ENCODE measurements at regions of chr21 and their contacts with region 1.

Region 1: DNA sequence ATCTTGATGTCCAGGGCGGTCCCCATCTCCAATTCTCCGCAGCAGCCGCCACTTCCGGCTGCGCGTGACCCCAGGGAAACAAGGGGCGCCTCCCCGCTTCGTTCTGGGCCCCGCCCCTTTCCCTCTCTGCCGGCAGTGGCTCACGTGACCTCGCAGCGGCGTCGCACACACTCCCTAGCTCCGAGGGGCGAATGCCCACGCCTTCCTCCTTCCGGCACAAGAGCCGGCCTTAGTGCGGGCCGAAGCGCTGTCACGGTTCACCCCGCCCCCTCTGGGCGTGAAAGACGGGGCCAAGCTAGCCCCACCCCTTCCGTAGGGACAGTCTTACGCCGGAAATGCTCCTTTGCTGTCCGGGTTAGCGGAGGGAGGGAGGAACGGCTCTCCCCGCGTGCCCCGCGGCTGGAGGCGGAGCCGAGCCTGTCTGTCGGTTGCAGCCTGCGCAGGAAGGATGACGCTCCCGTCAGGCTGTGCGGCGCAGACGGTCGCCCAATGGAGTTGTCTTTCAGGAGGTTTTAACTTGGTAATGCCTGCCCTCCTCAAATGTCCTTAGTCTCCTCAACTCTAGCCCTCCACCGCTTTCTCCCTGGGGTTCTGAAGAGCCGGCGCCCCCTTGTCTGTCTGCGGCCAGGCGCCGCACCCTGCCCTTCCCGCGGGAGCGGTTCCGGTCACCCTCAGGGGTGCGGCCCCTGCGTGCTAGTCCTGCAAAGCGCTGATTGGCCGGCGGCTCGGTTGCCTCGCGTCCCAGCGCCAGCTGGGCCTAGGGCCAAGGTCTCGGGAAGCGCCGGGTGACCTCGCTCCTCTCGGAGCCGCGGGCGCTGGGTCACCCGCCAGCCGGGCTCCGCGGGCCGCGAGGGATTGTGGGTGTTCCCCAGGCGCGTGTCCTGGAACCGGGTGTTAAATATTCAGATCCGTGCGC is at the start of gene VPS26C:
- DNase-seq: peak; percentile 100
- H3K4me3 ChIP-seq: peak within 1 kb of the TSS; percentile 35 to 73 (median 72)
- H3K27ac ChIP-seq: peak within 1 kb of the TSS; percentile 87
- H3K4me1 ChIP-seq: peaks cover 12% of the 10 kb centered on the region
- H3K27me3 ChIP-seq: no peaks in the 10 kb centered on the region
- CTCF ChIP-seq: no peak
- POLR2A ChIP-seq: peak; percentile 17
- total RNA-seq, gene VPS26C: 53.7 and 57.3 TPM in 2 replicates

Region 2: DNA sequence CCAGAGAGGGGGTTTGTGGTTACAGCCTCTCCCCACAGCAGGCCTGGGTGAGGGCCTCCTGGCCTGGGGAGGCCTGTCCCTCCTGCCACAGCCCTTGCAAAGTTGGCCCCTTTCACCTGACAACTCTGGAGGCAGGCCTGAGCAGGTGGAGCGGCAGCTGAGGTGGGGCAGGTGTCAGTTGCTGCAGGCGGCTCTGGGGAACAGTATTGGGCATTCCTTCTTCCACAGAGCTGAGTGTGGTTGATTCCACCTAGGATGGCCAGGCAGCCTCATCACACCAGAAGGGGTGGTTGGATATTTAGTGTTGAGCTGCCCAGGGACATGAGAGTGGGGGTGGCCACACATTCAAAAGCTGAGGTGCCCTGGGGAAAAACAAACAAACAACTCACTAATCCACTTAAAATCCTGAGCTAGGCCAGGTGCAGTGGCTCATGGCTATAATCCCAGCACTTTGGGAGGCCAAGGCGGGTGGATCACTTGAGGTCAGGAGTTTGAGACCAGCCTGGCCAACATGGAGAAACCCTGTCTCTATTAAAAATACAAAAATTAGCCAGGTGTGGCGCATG is 225.7 kb before region 1 on chr21:
- CTCF ChIA-PET with region 1: no interaction called
- POLR2A ChIA-PET with region 1: no interaction called
- dilution Hi-C with region 1: no loop called
- intact Hi-C with region 1: no loop called
- DNase-seq: no peak
- H3K4me3 ChIP-seq: no peak overlapping the region
- H3K27ac ChIP-seq: no peak overlapping the region
- H3K4me1 ChIP-seq: no peaks in the 10 kb centered on the region
- H3K27me3 ChIP-seq: peaks cover 6% of the 10 kb centered on the region in 2 experiments
- CTCF ChIP-seq: no peak
- POLR2A ChIP-seq: no peak

Region 3: DNA sequence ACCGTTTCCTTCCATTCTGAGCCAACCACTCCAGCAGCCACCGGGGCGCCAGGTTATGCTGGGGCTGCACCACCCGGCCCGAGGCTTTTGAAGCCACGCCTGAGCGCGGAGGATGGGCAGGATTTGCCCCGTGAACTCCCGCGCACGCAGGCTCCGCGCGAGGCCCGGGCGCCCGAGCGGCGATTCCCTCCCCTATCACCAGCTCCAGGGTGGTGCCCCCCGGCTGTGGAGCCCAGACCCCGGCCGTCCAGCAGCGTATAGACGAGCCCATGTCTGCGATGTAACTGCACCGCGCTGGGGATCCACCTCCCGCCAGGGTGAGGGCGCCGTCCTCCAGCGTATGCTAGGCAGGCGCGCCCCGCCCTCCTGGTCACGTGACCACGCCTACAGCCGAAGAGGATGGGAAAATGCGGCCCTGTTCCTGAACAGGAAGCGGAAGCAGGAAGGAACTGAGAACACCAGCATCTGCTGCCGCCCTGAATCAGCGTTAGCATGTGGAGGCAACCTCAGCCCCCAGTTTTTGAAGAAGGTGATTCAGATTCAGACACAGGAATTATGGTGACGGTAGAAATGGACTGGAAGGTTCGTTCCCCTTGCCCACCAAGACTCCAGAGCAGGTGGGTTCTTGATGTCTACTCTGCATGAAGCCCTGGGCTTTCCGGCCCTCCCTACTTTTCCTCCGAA is 46.4 kb before region 1 on chr21:
- CTCF ChIA-PET with region 1: no interaction called
- POLR2A ChIA-PET with region 1: interaction called, 3 read pairs
- dilution Hi-C with region 1: no loop called
- intact Hi-C with region 1: loop called (anchors 1 kb)
- DNase-seq: peak; percentile 93
- H3K4me3 ChIP-seq: peak overlapping the region; percentile 17 to 53 (median 52)
- H3K27ac ChIP-seq: peak overlapping the region; percentile 72
- H3K4me1 ChIP-seq: peaks cover 8% of the 10 kb centered on the region
- H3K27me3 ChIP-seq: no peaks in the 10 kb centered on the region
- CTCF ChIP-seq: peak; percentile 10 to 64
- POLR2A ChIP-seq: no peak

Region 4: GRCh38 chr21:37338671-37339551 is 71.4 kb after region 1 on chr21:
- CTCF ChIA-PET with region 1: no interaction called
- POLR2A ChIA-PET with region 1: no interaction called
- dilution Hi-C with region 1: no loop called
- intact Hi-C with region 1: loop called (anchors 1 kb)
- DNase-seq: peak; percentile 76
- H3K4me3 ChIP-seq: no peak overlapping the region
- H3K27ac ChIP-seq: peak overlapping the region; percentile 88
- H3K4me1 ChIP-seq: peaks cover 36% of the 10 kb centered on the region
- H3K27me3 ChIP-seq: no peaks in the 10 kb centered on the region
- CTCF ChIP-seq: no peak
- POLR2A ChIP-seq: no peak

Region 5: DNA sequence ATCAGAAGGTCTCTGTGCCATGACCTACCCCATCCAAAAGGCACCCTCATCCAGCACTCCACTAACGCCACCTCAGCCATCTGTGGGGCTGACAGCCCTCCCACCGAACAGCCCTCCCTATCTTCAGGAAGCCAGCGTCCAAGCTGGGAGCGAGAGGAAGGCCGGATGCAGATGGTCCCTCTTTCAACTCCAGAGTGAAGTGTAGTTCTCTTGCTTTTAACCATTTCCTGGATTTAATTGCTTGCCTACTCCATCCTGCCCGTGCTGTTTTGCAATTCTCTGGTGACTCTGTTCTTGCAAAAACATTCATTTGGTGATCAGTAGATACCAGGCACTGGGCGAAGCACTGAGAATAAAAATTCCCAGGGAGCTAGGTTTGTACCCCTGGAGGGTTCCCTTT is 90.9 kb after region 1 on chr21:
- CTCF ChIA-PET with region 1: interaction called, 3 read pairs
- POLR2A ChIA-PET with region 1: interaction called, 16 read pairs
- dilution Hi-C with region 1: no loop called
- intact Hi-C with region 1: loop called (anchors 1 kb)
- DNase-seq: peak; percentile 97
- H3K4me3 ChIP-seq: no peak overlapping the region
- H3K27ac ChIP-seq: peak overlapping the region; percentile 86
- H3K4me1 ChIP-seq: peaks cover 20% of the 10 kb centered on the region
- H3K27me3 ChIP-seq: no peaks in the 10 kb centered on the region
- CTCF ChIP-seq: no peak
- POLR2A ChIP-seq: peak; percentile 82

Region 6: GRCh38 chr21:37435120-37435519 is 167.6 kb after region 1 on chr21:
- CTCF ChIA-PET with region 1: no interaction called
- POLR2A ChIA-PET with region 1: no interaction called
- dilution Hi-C with region 1: no loop called
- intact Hi-C with region 1: loop called (anchors 5 kb)
- DNase-seq: peak; percentile 97
- H3K4me3 ChIP-seq: no peak overlapping the region
- H3K27ac ChIP-seq: no peak overlapping the region
- H3K4me1 ChIP-seq: peaks cover 4% of the 10 kb centered on the region
- H3K27me3 ChIP-seq: no peaks in the 10 kb centered on the region
- CTCF ChIP-seq: no peak
- POLR2A ChIP-seq: no peak

Region 7: DNA sequence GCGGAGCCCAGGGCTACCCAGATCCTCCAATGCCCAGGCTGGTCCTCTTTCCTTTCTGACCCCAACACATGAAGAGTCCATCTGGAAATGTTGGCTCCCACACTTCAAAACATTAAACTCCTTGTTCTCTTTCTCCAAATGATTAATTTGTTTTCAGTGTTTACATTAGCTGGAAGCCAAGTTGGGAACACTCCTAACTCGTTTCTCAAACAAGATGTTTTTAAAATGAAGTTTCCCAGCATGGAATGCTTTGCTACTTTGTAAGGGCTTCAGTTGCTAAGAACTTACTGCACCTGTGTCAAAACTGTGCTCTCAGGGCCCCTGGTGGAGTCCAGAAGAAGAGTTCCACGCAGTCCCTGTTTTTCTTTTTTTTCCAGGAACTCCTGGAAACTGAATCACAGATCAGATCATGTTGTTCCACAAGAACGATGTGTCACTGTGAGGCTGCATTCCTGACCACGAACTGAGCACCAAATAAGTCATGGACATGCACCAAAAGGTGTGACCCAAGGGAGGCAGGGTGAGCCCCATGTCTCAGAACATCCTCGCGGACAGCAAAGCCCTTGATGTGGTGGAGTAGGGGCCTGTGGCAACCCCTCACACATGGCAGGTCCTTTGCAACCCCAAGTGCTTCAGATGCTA is 391.4 kb after region 1 on chr21:
- CTCF ChIA-PET with region 1: no interaction called
- POLR2A ChIA-PET with region 1: no interaction called
- dilution Hi-C with region 1: no loop called
- intact Hi-C with region 1: loop called (anchors 5 kb)
- DNase-seq: peak; percentile 95
- H3K4me3 ChIP-seq: no peak overlapping the region
- H3K27ac ChIP-seq: peak overlapping the region; percentile 72
- H3K4me1 ChIP-seq: peaks cover 22% of the 10 kb centered on the region
- H3K27me3 ChIP-seq: no peaks in the 10 kb centered on the region
- CTCF ChIP-seq: peak; percentile 51 to 62
- POLR2A ChIP-seq: no peak